Left cardiac atrium (tissue), 4 donors: ENCODE measurements at regions of chr12 and their contacts with region 1.

Region 1: GRCh38 chr12:15220994-15221885 is at the start of gene RERG:
- DNase-seq: peak; percentile 85
- ATAC-seq: peak; percentile 98 to 99
- total RNA-seq, gene RERG: 7.0 to 7.3 TPM

Region 2: GRCh38 chr12:14845350-14845750 is 375.9 kb before region 1 on chr12:
- intact Hi-C with region 1: loop called in 1 of 2 experiments (anchors 10 kb)
- DNase-seq: peak; percentile 35
- ATAC-seq: peak; percentile 48 to 59

Region 3: GRCh38 chr12:15011162-15011561 is 210.1 kb before region 1 on chr12:
- intact Hi-C with region 1: loop called in 1 of 2 experiments (anchors 2 kb)
- DNase-seq: no peak
- ATAC-seq: no peak

Region 4: DNA sequence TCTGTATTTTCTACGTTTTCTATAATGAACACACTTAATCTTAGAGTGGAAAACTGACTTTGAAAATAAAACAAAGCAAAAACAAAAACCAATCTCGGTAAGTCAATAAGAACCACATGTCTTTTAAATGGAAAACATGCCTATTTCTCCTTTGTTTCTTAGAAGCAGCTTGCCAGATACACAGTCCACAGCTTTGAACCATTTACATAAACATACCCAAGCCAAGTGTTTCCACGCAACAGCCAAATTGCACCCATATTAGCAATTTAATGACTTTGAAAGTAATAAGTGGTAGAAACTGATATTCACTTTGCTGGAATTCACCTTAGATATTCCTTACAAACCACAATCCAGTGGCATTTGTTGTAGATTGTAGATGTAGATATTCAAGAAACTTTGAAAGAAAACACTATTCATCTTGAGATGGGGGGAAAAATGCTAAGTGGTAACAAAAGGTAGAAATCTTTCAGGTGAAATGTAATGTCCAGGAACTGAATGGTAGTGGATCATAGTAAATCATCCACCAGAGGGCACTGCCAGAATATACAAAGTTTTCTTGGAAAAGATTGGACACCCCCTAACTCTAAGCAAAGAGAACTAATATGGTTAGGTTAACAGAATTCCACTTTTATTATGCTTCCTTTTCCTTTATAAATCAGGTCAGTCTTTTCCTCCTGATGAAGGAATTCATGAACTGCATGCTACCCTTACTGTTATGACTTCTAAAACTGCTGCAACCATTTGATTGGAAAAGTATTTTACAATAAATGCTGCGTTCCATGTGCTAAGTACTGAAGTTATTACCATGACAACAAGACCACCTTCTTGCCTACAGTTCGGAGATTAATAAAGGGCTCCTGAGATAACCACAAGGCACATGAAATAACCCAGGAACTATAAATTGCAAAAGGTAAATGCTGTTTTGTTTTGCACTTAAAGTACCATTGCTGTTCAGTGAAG is 69.8 kb before region 1 on chr12:
- intact Hi-C with region 1: loop called (anchors 2 to 10 kb)
- DNase-seq: no peak
- ATAC-seq: peak; percentile 63 to 80